Naive thymus-derived CD4-positive, alpha-beta T cell (primary cell): ENCODE measurements at regions of chr19 and their contacts with region 1.

Region 1: GRCh38 chr19:5719961-5720790 is at the starts of genes CATSPERD and LONP1:
- DNase-seq: peak; percentile 96 to 100 (median 98)
- ATAC-seq: peak; percentile 95
- H3K4me3 ChIP-seq: peak within 1 kb of the TSS; percentile 86
- H3K4me3 Mint-ChIP-seq: peak within 1 kb of the TSS; percentile 87 to 96 (median 93)
- H3K27ac ChIP-seq: peak within 1 kb of the TSS; percentile 97
- H3K27ac Mint-ChIP-seq: peak within 1 kb of the TSS; percentile 94 to 98 (median 95)
- H3K4me1 ChIP-seq: peaks cover 12 to 16% of the 10 kb centered on the region in 2 donors
- H3K4me1 Mint-ChIP-seq: peaks cover 9 to 42% (median 29%) of the 10 kb centered on the region in 7 donors
- H3K27me3 ChIP-seq: no peaks in the 10 kb centered on the region
- H3K27me3 Mint-ChIP-seq: peaks cover 0 to 2% (median 0%) of the 10 kb centered on the region in 5 donors
- total RNA-seq, gene CATSPERD: 0.07 TPM in 1 of 5 experiments, not detected in the others
- total RNA-seq, gene LONP1: 62.8 to 102 (median 74.8) TPM

Region 2: GRCh38 chr19:5622463-5623396 is 97.4 kb before region 1 on chr19 and contains the starts of genes SAFB and SAFB2:
- CTCF ChIA-PET with region 1: no interaction called
- POLR2A ChIA-PET with region 1: interaction called, 15 read pairs
- intact Hi-C with region 1: loop called (anchors 1 kb)
- DNase-seq: peak; percentile 96 to 100 (median 100)
- ATAC-seq: peak; percentile 91
- H3K4me3 ChIP-seq: peak within 1 kb of the TSS; percentile 91
- H3K4me3 Mint-ChIP-seq: peak within 1 kb of the TSS; percentile 97 to 100 (median 100)
- H3K27ac ChIP-seq: peak within 1 kb of the TSS; percentile 97
- H3K27ac Mint-ChIP-seq: peak within 1 kb of the TSS; percentile 99 to 100 (median 100)
- H3K4me1 ChIP-seq: peaks cover 54 to 66% of the 10 kb centered on the region in 2 donors
- H3K4me1 Mint-ChIP-seq: peaks cover 52 to 79% (median 70%) of the 10 kb centered on the region in 7 donors
- H3K27me3 ChIP-seq: no peaks in the 10 kb centered on the region
- H3K27me3 Mint-ChIP-seq: peaks cover 0 to 5% (median 0%) of the 10 kb centered on the region in 5 donors
- total RNA-seq, gene SAFB: 141 to 203 (median 174) TPM
- total RNA-seq, gene SAFB2: 112 to 250 (median 243) TPM

Region 3: DNA sequence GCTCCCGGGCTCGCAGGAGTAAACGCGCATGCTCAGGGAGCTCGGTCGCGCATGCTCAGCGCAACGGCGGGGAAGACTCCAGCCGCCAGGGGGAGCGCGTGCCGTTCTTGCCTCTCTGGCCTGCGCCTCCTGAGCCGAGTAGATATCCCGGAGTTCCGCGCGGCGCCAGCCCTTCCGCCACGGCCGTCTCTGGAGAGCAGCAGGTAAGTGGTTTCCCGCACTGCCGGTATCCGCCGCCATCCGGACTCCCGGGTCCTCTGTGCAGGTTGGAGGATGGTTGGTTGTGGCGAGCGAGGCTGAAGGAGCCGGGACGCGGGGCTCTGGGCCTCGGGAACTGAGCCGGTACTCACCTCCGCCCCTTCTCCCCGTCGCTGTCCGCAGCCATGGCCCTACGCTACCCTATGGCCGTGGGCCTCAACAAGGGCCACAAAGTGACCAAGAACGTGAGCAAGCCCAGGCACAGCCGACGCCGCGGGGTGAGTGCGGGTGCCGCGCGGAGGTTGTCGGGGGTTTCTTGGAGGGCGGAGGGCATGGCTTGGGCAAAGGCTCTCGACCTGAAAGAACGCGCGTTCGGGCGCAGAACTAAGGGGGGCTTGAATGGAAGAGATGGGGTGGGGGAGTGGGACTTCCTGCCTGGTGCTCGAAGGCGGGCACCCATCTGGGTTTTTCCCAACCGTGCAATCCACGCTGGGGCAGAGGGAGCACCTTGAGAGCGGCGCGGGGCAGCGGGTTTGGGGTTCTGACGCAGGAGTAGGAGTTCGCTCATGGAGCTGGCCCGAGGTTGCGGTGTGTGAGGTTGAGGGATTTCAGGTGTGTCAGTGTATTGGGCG is 29.8 kb before region 1 on chr19 and contains the start of gene RPL36:
- CTCF ChIA-PET with region 1: interaction called, 10 read pairs
- POLR2A ChIA-PET with region 1: interaction called, 32 read pairs
- intact Hi-C with region 1: loop called (anchors 1 kb)
- DNase-seq: peak; percentile 95 to 100 (median 99)
- ATAC-seq: peak; percentile 77
- H3K4me3 ChIP-seq: peak within 1 kb of the TSS; percentile 90
- H3K4me3 Mint-ChIP-seq: peak within 1 kb of the TSS; percentile 90 to 98 (median 94)
- H3K27ac ChIP-seq: peak within 1 kb of the TSS; percentile 85
- H3K27ac Mint-ChIP-seq: peak within 1 kb of the TSS; percentile 89 to 97 (median 93)
- H3K4me1 ChIP-seq: peaks cover 12 to 21% of the 10 kb centered on the region in 2 donors
- H3K4me1 Mint-ChIP-seq: peaks cover 5 to 39% (median 33%) of the 10 kb centered on the region in 7 donors
- H3K27me3 ChIP-seq: no peaks in the 10 kb centered on the region
- H3K27me3 Mint-ChIP-seq: no peaks in the 10 kb centered on the region
- total RNA-seq, gene RPL36: 865 to 1,786 (median 1,037) TPM

Region 4: GRCh38 chr19:5827891-5828660 is 107.9 kb after region 1 on chr19:
- CTCF ChIA-PET with region 1: no interaction called
- POLR2A ChIA-PET with region 1: interaction called, 3 read pairs
- intact Hi-C with region 1: loop called in 1 of 2 experiments (anchors 1 kb)
- DNase-seq: peak; percentile 91 to 98 (median 94)
- ATAC-seq: peak; percentile 90
- H3K4me3 ChIP-seq: peak overlapping the region; percentile 76
- H3K4me3 Mint-ChIP-seq: peak overlapping the region; percentile 91 to 100 (median 97)
- H3K27ac ChIP-seq: peak overlapping the region; percentile 80
- H3K27ac Mint-ChIP-seq: peak overlapping the region; percentile 94 to 100 (median 97)
- H3K4me1 ChIP-seq: peaks cover 10 to 17% of the 10 kb centered on the region in 2 donors
- H3K4me1 Mint-ChIP-seq: peaks cover 5 to 19% (median 10%) of the 10 kb centered on the region in 7 donors
- H3K27me3 ChIP-seq: no peaks in the 10 kb centered on the region
- H3K27me3 Mint-ChIP-seq: peaks cover 0 to 6% (median 0%) of the 10 kb centered on the region in 5 donors

Region 5: DNA sequence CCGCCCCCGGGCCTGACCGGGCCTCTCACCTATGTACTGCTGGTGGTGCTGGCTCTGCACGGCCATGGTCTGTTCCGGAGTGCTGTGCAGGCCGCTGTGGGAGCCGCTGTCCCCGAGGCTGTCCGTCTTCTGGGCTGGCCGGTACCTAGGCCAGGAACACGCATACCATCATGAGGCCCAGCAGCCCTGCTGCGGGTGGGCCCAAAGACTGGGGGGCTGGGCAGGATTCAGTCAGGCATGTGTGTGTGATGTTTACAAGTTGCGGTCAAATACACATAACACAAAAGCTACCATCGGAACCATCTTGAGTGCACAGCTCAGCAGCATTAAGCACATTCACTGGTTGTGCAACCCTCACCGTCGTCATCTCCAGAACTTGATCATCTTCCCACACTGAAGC is 289.9 kb after region 1 on chr19:
- CTCF ChIA-PET with region 1: no interaction called
- POLR2A ChIA-PET with region 1: no interaction called
- intact Hi-C with region 1: no loop called
- DNase-seq: no peak
- ATAC-seq: no peak
- H3K4me3 ChIP-seq: no peak overlapping the region
- H3K4me3 Mint-ChIP-seq: no peak overlapping the region
- H3K27ac ChIP-seq: no peak overlapping the region
- H3K27ac Mint-ChIP-seq: no peak overlapping the region
- H3K4me1 ChIP-seq: no peaks in the 10 kb centered on the region
- H3K4me1 Mint-ChIP-seq: peaks cover 0 to 5% (median 0%) of the 10 kb centered on the region in 7 donors
- H3K27me3 ChIP-seq: no peaks in the 10 kb centered on the region
- H3K27me3 Mint-ChIP-seq: no peaks in the 10 kb centered on the region

Region 6: DNA sequence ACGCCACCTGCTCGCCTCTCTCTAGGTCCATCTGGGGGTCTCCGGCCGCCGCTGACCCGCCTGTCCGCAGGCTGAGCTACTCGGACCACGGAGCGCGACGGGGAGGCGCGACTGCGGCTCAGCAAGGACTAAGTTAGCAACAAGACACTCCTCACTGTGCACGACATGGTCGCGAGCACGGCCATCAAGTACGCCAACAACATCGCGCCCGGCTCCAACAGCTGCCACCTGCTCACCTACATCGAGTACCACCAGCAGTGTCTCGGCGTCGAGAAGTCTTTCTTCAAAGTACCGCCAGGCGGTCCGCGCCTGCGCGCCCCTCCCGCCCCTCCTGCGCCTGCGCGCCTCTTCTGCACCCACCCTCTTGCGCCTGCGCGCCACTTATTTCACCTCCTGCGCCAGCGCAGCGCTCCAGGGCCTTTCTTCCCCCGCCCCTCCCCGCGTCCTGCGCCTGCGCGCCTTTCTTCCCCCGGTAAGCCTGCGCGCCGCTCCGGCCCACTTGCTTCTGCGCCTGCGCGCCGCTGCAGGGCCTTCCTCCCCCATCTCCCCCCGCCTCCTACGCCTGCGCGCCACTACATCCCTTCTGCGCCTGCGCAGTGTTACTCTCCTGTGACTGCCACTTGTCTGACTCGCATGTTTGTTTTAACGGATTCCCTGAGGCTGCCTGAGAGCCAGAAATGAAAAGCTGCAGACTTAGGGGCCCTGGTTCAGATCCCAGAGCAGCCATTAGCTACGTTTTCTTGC is 479.2 kb after region 1 on chr19:
- CTCF ChIA-PET with region 1: no interaction called
- POLR2A ChIA-PET with region 1: no interaction called
- intact Hi-C with region 1: loop called in 1 of 2 experiments (anchors 10 kb)
- DNase-seq: peak; percentile 97 to 100 (median 99)
- ATAC-seq: peak; percentile 93
- H3K4me3 ChIP-seq: peak overlapping the region; percentile 97
- H3K4me3 Mint-ChIP-seq: peak overlapping the region; percentile 92 to 99 (median 95)
- H3K27ac ChIP-seq: peak overlapping the region; percentile 70
- H3K27ac Mint-ChIP-seq: peak overlapping the region; percentile 89 to 97 (median 91)
- H3K4me1 ChIP-seq: peaks cover 6% of the 10 kb centered on the region in 2 donors
- H3K4me1 Mint-ChIP-seq: peaks cover 5 to 20% (median 18%) of the 10 kb centered on the region in 7 donors
- H3K27me3 ChIP-seq: no peaks in the 10 kb centered on the region
- H3K27me3 Mint-ChIP-seq: peaks cover 0 to 8% (median 4%) of the 10 kb centered on the region in 5 donors